Testis (tissue), 5 donors: ENCODE measurements at regions of chr4 and their contacts with region 1.

Region 1: DNA sequence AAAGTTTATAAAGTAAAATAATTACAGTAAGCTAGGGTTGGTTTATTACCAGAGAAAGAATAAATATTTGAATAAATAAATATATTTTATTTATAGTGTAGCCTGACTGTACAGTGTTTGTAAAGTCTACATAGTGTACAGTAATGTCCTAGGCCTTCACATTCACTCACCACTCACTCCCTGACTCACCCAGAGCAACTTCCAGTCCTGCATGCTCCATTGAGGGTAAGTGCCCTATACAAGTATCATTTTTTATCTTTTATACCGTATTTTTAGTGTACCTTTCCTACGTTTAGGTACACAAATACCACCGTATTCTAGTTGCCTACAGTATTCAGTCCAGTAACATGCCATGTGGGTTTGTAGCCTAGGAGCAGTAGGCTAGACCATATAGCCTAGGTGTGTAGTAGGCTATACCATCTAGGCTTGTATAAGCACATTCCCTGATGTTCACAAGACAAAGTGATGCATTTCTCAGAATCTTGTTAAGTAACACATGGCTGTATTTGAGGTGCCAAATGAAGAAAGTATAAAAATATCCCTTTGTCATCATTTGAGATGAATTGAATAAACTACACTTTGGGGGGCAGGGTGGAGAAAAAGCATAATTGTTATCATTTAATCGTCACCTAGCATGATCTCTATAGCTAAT is 14.7 kb upstream of the KLHL8 start:
- DNase-seq: no peak
- H3K4me3 ChIP-seq: peak overlapping the region in 1 of 2 donors; percentile 32
- H3K27ac ChIP-seq: no peak overlapping the region
- H3K4me1 ChIP-seq: no peaks in the 10 kb centered on the region
- H3K27me3 ChIP-seq: no peaks in the 10 kb centered on the region
- CTCF ChIP-seq: no peak
- POLR2A ChIP-seq: no peak

Region 2: GRCh38 chr4:86927843-86928395 is 307.2 kb before region 1 on chr4:
- intact Hi-C with region 1: loop called (anchors 10 kb)
- DNase-seq: no peak
- H3K4me3 ChIP-seq: no peak overlapping the region
- H3K27ac ChIP-seq: no peak overlapping the region
- H3K4me1 ChIP-seq: no peaks in the 10 kb centered on the region
- H3K27me3 ChIP-seq: no peaks in the 10 kb centered on the region
- CTCF ChIP-seq: no peak
- POLR2A ChIP-seq: no peak

Region 3: GRCh38 chr4:87058356-87059073 is 176.6 kb before region 1 on chr4:
- intact Hi-C with region 1: no loop called
- DNase-seq: no peak
- H3K4me3 ChIP-seq: no peak overlapping the region
- H3K27ac ChIP-seq: peak overlapping the region in 1 of 2 donors; percentile 34
- H3K4me1 ChIP-seq: peaks cover 30% of the 10 kb centered on the region
- H3K27me3 ChIP-seq: no peaks in the 10 kb centered on the region
- CTCF ChIP-seq: no peak
- POLR2A ChIP-seq: no peak

Region 4: GRCh38 chr4:87150498-87151261 is 84.5 kb before region 1 on chr4:
- intact Hi-C with region 1: loop called (anchors 5 kb)
- DNase-seq: peak; percentile 73
- H3K4me3 ChIP-seq: no peak overlapping the region
- H3K27ac ChIP-seq: no peak overlapping the region
- H3K4me1 ChIP-seq: no peaks in the 10 kb centered on the region
- H3K27me3 ChIP-seq: no peaks in the 10 kb centered on the region
- CTCF ChIP-seq: peak; percentile 87 to 96 (median 89)
- POLR2A ChIP-seq: no peak